Colonic mucosa (tissue), 4 donors: ENCODE measurements at regions of chr14 and their contacts with region 1.

Region 1: GRCh38 chr14:86299994-86300393 is 770.0 kb downstream of the FLRT2 start:
- DNase-seq: no peak
- H3K4me3 ChIP-seq: no peak overlapping the region
- H3K27ac ChIP-seq: no peak overlapping the region
- H3K4me1 ChIP-seq: no peaks in the 10 kb centered on the region
- H3K27me3 ChIP-seq: no peaks in the 10 kb centered on the region
- CTCF ChIP-seq: no peak

Region 2: GRCh38 chr14:86357876-86358275 is 57.9 kb after region 1 on chr14:
- intact Hi-C with region 1: loop called (anchors 5 kb)
- DNase-seq: no peak
- H3K4me3 ChIP-seq: no peak overlapping the region
- H3K27ac ChIP-seq: no peak overlapping the region
- H3K4me1 ChIP-seq: no peaks in the 10 kb centered on the region
- H3K27me3 ChIP-seq: no peaks in the 10 kb centered on the region
- CTCF ChIP-seq: no peak